ENCODE measurements at regions of chr10 and their contacts with region 1.

Region 1: GRCh38 chr10:73772280-73773151 is 9.3 kb upstream of the CHCHD1 start:
- DNase-seq: peak; percentile 77 to 94
- ATAC-seq: peak; percentile 61 to 81 (median 67)
- H3K4me3 ChIP-seq: peak overlapping the region; percentile 67
- H3K4me3 Mint-ChIP-seq: peak overlapping the region; percentile 97
- H3K27ac ChIP-seq: peak overlapping the region; percentile 95
- H3K27ac Mint-ChIP-seq: peak overlapping the region; percentile 84 to 96
- H3K4me1 ChIP-seq: peaks cover 38% of the 10 kb centered on the region
- H3K4me1 Mint-ChIP-seq: peaks cover 47 to 61% of the 10 kb centered on the region in 2 donors
- H3K27me3 ChIP-seq: no peaks in the 10 kb centered on the region
- H3K27me3 Mint-ChIP-seq: no peaks in the 10 kb centered on the region
- CTCF ChIP-seq: no peak

Region 2: GRCh38 chr10:73759512-73760115 is 12.9 kb before region 1 on chr10:
- intact Hi-C with region 1: loop called (anchors 1 kb)
- DNase-seq: peak; percentile 71 to 87
- ATAC-seq: peak; percentile 82 to 94 (median 89)
- H3K4me3 ChIP-seq: no peak overlapping the region
- H3K4me3 Mint-ChIP-seq: peak overlapping the region; percentile 75
- H3K27ac ChIP-seq: peak overlapping the region; percentile 90
- H3K27ac Mint-ChIP-seq: peak overlapping the region; percentile 93 to 96
- H3K4me1 ChIP-seq: peaks cover 53% of the 10 kb centered on the region
- H3K4me1 Mint-ChIP-seq: peaks cover 67 to 74% of the 10 kb centered on the region in 2 donors
- H3K27me3 ChIP-seq: no peaks in the 10 kb centered on the region
- H3K27me3 Mint-ChIP-seq: no peaks in the 10 kb centered on the region
- CTCF ChIP-seq: no peak

Region 3: GRCh38 chr10:73810735-73811465 is 38.4 kb after region 1 on chr10:
- intact Hi-C with region 1: loop called (anchors 5 kb)
- DNase-seq: peak in 1 of 2 donors; percentile 76
- ATAC-seq: peak; percentile 14 to 24 (median 22)
- H3K4me3 ChIP-seq: peak overlapping the region; percentile 57
- H3K4me3 Mint-ChIP-seq: peak overlapping the region; percentile 89
- H3K27ac ChIP-seq: peak overlapping the region; percentile 72
- H3K27ac Mint-ChIP-seq: peak overlapping the region; percentile 81 to 82
- H3K4me1 ChIP-seq: peaks cover 31% of the 10 kb centered on the region
- H3K4me1 Mint-ChIP-seq: peaks cover 31 to 34% of the 10 kb centered on the region in 2 donors
- H3K27me3 ChIP-seq: no peaks in the 10 kb centered on the region
- H3K27me3 Mint-ChIP-seq: no peaks in the 10 kb centered on the region
- CTCF ChIP-seq: no peak

Region 4: GRCh38 chr10:73879296-73880173 is 107.0 kb after region 1 on chr10:
- intact Hi-C with region 1: loop called (anchors 1 kb)
- DNase-seq: peak; percentile 93 to 99
- ATAC-seq: peak; percentile 88 to 97 (median 90)
- H3K4me3 ChIP-seq: no peak overlapping the region
- H3K4me3 Mint-ChIP-seq: peak overlapping the region; percentile 40
- H3K27ac ChIP-seq: peak overlapping the region; percentile 2
- H3K27ac Mint-ChIP-seq: peak overlapping the region; percentile 44 to 78
- H3K4me1 ChIP-seq: peaks cover 33% of the 10 kb centered on the region
- H3K4me1 Mint-ChIP-seq: peaks cover 21 to 36% of the 10 kb centered on the region in 2 donors
- H3K27me3 ChIP-seq: no peaks in the 10 kb centered on the region
- H3K27me3 Mint-ChIP-seq: peaks cover 7% of the 10 kb centered on the region in 2 donors
- CTCF ChIP-seq: peak; percentile 89

Region 5: DNA sequence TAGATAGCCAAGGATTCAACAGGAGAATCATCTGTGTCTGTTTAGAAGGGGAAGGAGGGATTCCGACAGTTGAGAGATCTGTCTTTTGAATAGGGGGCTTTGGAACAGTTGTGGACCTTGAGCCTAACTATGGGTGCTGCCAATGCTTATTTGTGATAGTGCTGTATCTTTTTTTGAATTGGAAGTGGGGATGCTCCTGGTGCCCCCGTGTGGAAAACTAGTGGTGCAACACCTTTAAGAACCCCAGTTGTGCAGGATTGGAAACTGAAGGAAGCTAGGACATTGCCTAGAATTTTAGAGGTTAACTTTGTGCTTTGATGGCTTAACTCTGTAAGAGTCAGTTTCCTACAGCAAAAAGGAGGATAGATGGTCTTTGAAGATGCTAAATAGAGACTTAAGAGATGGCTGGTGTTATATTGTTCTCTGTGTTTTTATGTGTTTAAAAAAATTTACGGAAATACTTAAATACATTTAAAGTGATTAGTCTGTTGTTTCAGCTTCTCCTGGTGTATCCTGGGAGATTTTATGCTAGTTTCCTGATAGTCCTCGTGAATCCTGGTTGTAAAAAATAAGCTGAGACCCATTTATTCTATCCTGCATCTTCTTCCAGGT is 308.8 kb after region 1 on chr10:
- intact Hi-C with region 1: loop called (anchors 2 kb)
- DNase-seq: peak in 1 of 2 donors; percentile 72
- ATAC-seq: peak in 2 of 3 donors; percentile 49 to 60
- H3K4me3 ChIP-seq: no peak overlapping the region
- H3K4me3 Mint-ChIP-seq: no peak overlapping the region
- H3K27ac ChIP-seq: no peak overlapping the region
- H3K27ac Mint-ChIP-seq: peak overlapping the region; percentile 24 to 71
- H3K4me1 ChIP-seq: peaks cover 9% of the 10 kb centered on the region
- H3K4me1 Mint-ChIP-seq: peaks cover 55 to 65% of the 10 kb centered on the region in 2 donors
- H3K27me3 ChIP-seq: no peaks in the 10 kb centered on the region
- H3K27me3 Mint-ChIP-seq: no peaks in the 10 kb centered on the region
- CTCF ChIP-seq: peak; percentile 47

Region 6: GRCh38 chr10:74179111-74179710 is 406.7 kb after region 1 on chr10:
- intact Hi-C with region 1: no loop called
- DNase-seq: no peak
- ATAC-seq: no peak
- H3K4me3 ChIP-seq: no peak overlapping the region
- H3K4me3 Mint-ChIP-seq: no peak overlapping the region
- H3K27ac ChIP-seq: no peak overlapping the region
- H3K27ac Mint-ChIP-seq: peak overlapping the region; percentile 91 to 95
- H3K4me1 ChIP-seq: peaks cover 14% of the 10 kb centered on the region
- H3K4me1 Mint-ChIP-seq: peaks cover 15 to 32% of the 10 kb centered on the region in 2 donors
- H3K27me3 ChIP-seq: no peaks in the 10 kb centered on the region
- H3K27me3 Mint-ChIP-seq: no peaks in the 10 kb centered on the region
- CTCF ChIP-seq: no peak

Measured in natural killer cell (primary cell).